CD4-positive, alpha-beta T cell (primary cell): ENCODE measurements at regions of chr15 and their contacts with region 1.

Region 1: DNA sequence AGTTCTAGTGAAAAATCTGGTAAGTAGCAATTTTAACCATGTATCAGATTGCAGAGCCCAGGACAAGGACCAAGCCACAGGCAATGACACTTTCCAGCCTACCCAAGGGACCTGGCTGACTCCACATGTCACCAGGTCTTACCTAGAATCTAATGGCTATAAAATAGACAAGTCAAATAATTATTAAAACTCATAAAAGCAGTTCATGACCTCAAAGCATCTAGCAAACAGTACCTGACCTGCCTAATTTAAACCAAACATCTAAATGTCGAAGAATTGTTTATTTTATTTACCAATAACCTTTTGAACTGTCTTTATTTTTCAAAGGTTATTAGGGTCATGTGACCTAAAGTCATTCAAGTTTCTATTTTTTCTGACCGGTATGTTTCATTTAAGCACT is 35.6 kb upstream of the MKRN3 start:
- DNase-seq: no peak
- ATAC-seq: no peak
- H3K4me3 ChIP-seq: no peak overlapping the region
- H3K4me3 Mint-ChIP-seq: no peak overlapping the region
- H3K27ac ChIP-seq: no peak overlapping the region
- H3K27ac Mint-ChIP-seq: no peak overlapping the region
- H3K4me1 ChIP-seq: no peaks in the 10 kb centered on the region
- H3K4me1 Mint-ChIP-seq: no peaks in the 10 kb centered on the region
- H3K27me3 ChIP-seq: no peaks in the 10 kb centered on the region
- H3K27me3 Mint-ChIP-seq: no peaks in the 10 kb centered on the region
- CTCF ChIP-seq: no peak

Region 2: DNA sequence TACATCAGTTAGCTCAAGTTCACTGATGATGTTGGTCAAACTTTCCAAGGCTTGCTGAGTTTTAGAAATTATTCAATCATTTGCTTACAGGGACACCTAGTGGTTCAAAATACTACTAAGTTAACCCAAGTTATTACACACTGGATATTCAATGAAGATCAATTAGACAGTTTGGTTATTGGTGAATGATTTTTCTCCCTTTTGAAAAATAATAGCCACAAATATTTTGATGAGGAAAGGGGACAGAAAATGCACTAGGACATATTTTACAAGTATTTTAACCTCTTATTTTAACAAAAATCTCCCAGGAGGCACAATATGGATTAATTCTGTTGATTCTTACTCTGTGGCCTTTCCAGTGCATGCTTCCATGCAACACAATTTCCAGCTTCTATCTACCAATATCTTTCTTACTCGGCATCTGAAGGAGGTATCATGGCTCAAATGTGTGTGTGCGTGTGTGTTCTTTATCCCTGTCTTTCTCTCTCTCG is 62.7 kb before region 1 on chr15:
- CTCF ChIA-PET with region 1: no interaction called
- POLR2A ChIA-PET with region 1: no interaction called
- intact Hi-C with region 1: loop called in 1 of 2 experiments (anchors 10 kb)
- DNase-seq: peak in 1 of 14 experiments; percentile 2
- ATAC-seq: no peak
- H3K4me3 ChIP-seq: no peak overlapping the region
- H3K4me3 Mint-ChIP-seq: no peak overlapping the region
- H3K27ac ChIP-seq: no peak overlapping the region
- H3K27ac Mint-ChIP-seq: no peak overlapping the region
- H3K4me1 ChIP-seq: no peaks in the 10 kb centered on the region
- H3K4me1 Mint-ChIP-seq: no peaks in the 10 kb centered on the region
- H3K27me3 ChIP-seq: no peaks in the 10 kb centered on the region
- H3K27me3 Mint-ChIP-seq: peaks cover 14% of the 10 kb centered on the region
- CTCF ChIP-seq: no peak